Spleen (tissue), 13 donors: ENCODE measurements at regions of chr4 and their contacts with region 1.

Region 1: DNA sequence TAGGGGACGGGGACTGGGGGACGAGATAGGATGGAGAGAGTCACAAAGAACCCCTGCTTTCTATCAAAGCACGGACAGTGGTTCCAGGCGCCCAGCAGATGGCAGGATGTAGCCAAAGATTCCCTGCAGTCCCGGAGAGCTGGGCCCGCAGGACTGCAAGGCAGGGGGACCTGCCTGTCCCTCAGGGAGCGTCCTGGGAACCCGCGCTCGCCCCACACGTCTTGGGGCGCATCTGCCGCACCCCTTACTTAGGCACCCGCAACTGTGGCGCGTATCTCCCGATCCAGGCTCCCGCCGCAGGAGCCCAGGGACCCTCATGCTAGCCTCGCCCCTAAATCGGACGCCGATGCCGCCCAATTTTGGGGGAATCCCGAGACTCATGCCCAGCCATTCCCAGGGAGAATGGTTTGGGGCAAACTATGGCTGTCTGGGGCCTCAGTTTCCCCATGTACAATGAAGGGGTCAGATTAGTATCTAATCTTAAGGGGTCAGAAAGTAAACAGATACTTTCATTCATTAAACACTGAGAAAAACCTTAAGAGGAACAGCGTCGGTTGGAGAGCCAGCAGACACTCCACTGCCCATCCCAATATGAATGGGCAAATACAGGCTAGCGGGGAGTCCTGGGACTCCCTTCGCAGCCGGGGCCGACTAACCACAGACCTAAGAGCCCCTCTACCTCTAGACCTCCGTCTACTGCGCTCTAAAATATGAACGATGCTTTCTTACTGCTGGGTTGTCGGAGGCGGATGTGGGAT is 581 bp upstream of the STK32B start:
- DNase-seq: peak; percentile 84
- H3K4me3 ChIP-seq: peak overlapping the region; percentile 31 to 68 (median 48)
- H3K27ac ChIP-seq: no peak overlapping the region
- H3K4me1 ChIP-seq: peaks cover 14 to 30% (median 22%) of the 10 kb centered on the region in 6 donors
- H3K27me3 ChIP-seq: peaks cover 0 to 60% (median 19%) of the 10 kb centered on the region in 7 donors
- CTCF ChIP-seq: peak; percentile 14 to 74 (median 57)
- POLR2A ChIP-seq: no peak

Region 2: DNA sequence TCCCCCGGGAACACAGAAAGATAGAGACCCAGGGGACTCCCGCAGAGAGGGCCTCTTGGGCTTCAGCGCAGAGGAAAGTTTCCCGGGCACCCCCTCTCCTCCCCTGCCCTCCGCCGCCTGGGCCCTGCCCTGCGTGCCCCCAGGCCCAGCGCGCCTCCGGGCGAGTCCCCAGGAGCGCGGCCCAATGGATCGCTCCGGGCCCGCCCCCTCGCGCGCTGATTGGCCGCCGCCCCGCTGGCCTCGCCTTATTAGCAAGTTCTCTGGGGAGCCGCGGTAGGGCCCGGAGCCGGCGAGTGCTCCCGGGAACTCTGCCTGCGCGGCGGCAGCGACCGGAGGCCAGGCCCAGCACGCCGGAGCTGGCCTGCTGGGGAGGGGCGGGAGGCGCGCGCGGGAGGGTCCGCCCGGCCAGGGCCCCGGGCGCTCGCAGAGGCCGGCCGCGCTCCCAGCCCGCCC is 191.3 kb before region 1 on chr4 and contains the start of gene MSX1:
- intact Hi-C with region 1: no loop called
- DNase-seq: peak; percentile 89
- H3K4me3 ChIP-seq: peak within 1 kb of the TSS; percentile 33 to 78 (median 58)
- H3K27ac ChIP-seq: peak within 1 kb of the TSS; percentile 27 to 82 (median 78)
- H3K4me1 ChIP-seq: peaks cover 0 to 74% (median 40%) of the 10 kb centered on the region in 6 donors
- H3K27me3 ChIP-seq: peaks cover 3 to 100% (median 91%) of the 10 kb centered on the region in 7 donors
- CTCF ChIP-seq: no peak
- POLR2A ChIP-seq: peak in 1 of 3 donors; percentile 68
- total RNA-seq, gene MSX1: 2.8 to 6.8 (median 5.2) TPM

Region 3: DNA sequence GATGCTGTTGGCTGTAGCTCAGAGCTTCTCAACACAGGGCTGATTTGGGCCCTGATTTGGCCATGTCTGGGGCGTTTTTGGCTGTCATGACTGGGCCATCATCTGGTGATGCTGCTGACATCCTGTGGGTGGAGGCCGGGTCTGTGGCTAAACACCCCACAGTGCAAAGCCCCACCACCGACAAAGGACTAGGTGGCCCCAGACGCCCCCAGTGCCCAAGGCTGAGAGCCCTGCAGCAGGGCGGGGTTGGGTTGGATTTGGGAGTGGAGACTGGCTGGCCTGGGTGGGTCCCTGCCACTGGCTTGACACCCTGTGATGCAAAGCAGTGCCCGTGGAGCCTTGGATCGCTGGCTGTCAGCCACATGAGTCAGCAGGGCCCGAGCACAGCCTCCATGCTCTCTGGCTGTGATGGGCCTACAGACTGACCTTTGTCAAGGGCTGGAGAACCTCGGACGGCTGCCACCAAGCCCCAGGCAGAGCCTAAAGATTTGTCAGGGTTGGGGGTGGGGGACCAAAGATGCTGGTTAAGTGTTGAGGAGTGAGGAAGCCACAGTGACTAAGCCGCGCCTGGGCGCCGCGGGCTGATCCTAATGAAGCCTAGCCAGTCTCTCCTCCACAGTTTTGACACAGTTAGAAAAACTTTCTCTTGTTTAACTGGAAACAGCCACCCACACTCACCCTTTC is 59.7 kb before region 1 on chr4:
- intact Hi-C with region 1: loop called (anchors 5 kb)
- DNase-seq: no peak
- H3K4me3 ChIP-seq: no peak overlapping the region
- H3K27ac ChIP-seq: peak overlapping the region in 6 of 8 donors; percentile 8 to 63 (median 42)
- H3K4me1 ChIP-seq: peaks cover 0 to 18% (median 7%) of the 10 kb centered on the region in 6 donors
- H3K27me3 ChIP-seq: peaks cover 0 to 26% (median 0%) of the 10 kb centered on the region in 7 donors
- CTCF ChIP-seq: no peak
- POLR2A ChIP-seq: no peak